PC-9 (cell line): ENCODE measurements at regions of chr10 and their contacts with region 1.

Region 1: DNA sequence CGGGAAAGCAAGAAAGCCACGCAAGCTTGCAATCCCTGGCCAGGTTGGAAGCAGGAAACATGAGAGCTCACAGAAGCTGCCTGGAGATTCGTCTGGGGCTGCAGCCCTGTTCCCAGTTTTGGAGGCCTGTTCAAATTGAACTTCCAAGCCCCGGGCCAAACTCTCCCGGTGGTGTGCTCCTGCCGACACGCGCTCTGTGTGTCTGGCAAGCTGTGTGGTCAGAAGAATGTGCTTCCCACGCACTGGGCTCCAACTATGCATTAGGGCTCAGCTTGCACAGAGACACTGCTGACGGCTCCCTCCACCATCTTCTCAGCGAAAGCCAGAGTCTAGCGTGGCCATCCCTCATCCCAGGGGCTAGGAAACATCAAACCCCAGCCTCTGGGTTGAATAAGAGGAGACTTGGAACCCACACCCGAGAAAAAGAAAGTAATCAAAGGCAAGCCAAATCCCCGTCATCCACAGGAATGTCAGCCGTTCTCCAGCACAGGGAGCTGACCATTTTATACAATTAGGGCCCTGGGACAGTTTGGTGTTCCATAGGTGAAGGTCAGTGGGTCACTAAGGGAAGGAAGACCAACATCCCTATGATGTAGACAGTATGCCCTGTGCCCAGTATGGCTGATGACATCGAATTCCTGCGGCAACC is 107.2 kb downstream of the FGFR2 start:
- DNase-seq: no peak
- H3K4me3 ChIP-seq: no peak overlapping the region
- H3K27ac ChIP-seq: no peak overlapping the region
- H3K4me1 ChIP-seq: no peaks in the 10 kb centered on the region
- H3K27me3 ChIP-seq: peaks cover 79% of the 10 kb centered on the region
- CTCF ChIP-seq: no peak

Region 2: GRCh38 chr10:120789303-120790203 is 701.4 kb before region 1 on chr10:
- CTCF ChIA-PET with region 1: interaction called, 15 read pairs
- POLR2A ChIA-PET with region 1: no interaction called
- intact Hi-C with region 1: no loop called
- DNase-seq: no peak
- H3K4me3 ChIP-seq: no peak overlapping the region
- H3K27ac ChIP-seq: no peak overlapping the region
- H3K4me1 ChIP-seq: no peaks in the 10 kb centered on the region
- H3K27me3 ChIP-seq: peaks cover 6% of the 10 kb centered on the region; the same call in 1 of the 2 replicates
- CTCF ChIP-seq: no peak

Region 3: GRCh38 chr10:122279725-122280141 is 788.7 kb after region 1 on chr10:
- CTCF ChIA-PET with region 1: no interaction called
- POLR2A ChIA-PET with region 1: no interaction called
- intact Hi-C with region 1: no loop called
- DNase-seq: peak in 1 of 2 experiments; percentile 64
- H3K4me3 ChIP-seq: no peak overlapping the region
- H3K27ac ChIP-seq: no peak overlapping the region
- H3K4me1 ChIP-seq: no peaks in the 10 kb centered on the region
- H3K27me3 ChIP-seq: no peaks in the 10 kb centered on the region
- CTCF ChIP-seq: peak; percentile 71

Region 4: DNA sequence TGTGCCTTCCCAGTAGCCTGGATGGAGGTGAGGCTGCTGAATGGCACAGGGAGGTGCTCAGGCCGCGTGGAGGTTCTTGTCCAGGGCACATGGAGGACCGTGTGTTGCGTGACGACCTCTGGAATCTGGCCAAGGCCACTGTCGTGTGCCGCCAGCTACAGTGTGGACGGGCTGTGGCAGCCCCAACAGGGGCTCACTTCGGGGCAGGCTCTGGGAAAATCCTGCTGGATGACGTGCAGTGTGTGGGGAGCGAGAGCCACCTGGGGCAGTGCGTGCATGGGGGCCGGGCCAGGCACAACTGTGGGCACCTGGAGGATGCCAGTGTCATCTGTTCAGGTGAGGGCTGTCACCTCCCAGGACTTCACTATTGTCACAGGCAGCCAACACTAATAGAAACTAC is 1258.9 kb after region 1 on chr10:
- CTCF ChIA-PET with region 1: interaction called, 12 read pairs
- POLR2A ChIA-PET with region 1: no interaction called
- intact Hi-C with region 1: no loop called
- DNase-seq: no peak
- H3K4me3 ChIP-seq: no peak overlapping the region
- H3K27ac ChIP-seq: no peak overlapping the region
- H3K4me1 ChIP-seq: no peaks in the 10 kb centered on the region
- H3K27me3 ChIP-seq: peaks cover 15% of the 10 kb centered on the region
- CTCF ChIP-seq: no peak